ENCODE measurements at regions of chr12 and their contacts with region 1.

Region 1: GRCh38 chr12:111685744-111686517 is at the starts of genes ACAD10 and BRAP:
- DNase-seq: peak; percentile 97
- H3K4me3 Mint-ChIP-seq: peak within 1 kb of the TSS; percentile 95
- H3K27ac Mint-ChIP-seq: peak within 1 kb of the TSS; percentile 89
- H3K4me1 Mint-ChIP-seq: peaks cover 32% of the 10 kb centered on the region
- H3K27me3 Mint-ChIP-seq: peaks cover 2% of the 10 kb centered on the region
- total RNA-seq, gene ACAD10: 22.5 to 24.2 TPM
- total RNA-seq, gene BRAP: 16.8 to 18.0 TPM

Region 2: DNA sequence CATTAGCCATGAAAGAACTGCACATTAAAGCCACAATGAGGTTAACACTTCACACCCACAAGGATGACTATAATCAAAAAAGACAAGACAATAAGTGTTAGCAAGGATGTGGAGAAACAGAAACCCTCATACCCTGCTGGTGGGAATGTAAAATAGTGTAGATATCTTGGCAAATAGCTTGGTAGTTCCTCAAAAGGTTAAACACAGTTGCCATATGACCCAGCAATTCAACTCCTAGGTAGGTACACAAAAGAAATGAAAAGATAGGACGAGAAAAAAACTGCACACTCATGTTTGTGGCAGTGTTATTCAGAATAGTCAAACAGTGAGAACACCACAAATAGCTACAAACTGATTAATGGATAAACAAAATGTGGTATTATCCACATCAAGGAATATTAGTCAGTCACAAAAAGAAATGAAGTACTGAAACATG is 180.3 kb before region 1 on chr12:
- CTCF ChIA-PET with region 1: no interaction called
- POLR2A ChIA-PET with region 1: no interaction called
- intact Hi-C with region 1: no loop called
- DNase-seq: no peak
- H3K4me3 Mint-ChIP-seq: no peak overlapping the region
- H3K27ac Mint-ChIP-seq: no peak overlapping the region
- H3K4me1 Mint-ChIP-seq: peaks cover 11% of the 10 kb centered on the region
- H3K27me3 Mint-ChIP-seq: no peaks in the 10 kb centered on the region

Region 3: DNA sequence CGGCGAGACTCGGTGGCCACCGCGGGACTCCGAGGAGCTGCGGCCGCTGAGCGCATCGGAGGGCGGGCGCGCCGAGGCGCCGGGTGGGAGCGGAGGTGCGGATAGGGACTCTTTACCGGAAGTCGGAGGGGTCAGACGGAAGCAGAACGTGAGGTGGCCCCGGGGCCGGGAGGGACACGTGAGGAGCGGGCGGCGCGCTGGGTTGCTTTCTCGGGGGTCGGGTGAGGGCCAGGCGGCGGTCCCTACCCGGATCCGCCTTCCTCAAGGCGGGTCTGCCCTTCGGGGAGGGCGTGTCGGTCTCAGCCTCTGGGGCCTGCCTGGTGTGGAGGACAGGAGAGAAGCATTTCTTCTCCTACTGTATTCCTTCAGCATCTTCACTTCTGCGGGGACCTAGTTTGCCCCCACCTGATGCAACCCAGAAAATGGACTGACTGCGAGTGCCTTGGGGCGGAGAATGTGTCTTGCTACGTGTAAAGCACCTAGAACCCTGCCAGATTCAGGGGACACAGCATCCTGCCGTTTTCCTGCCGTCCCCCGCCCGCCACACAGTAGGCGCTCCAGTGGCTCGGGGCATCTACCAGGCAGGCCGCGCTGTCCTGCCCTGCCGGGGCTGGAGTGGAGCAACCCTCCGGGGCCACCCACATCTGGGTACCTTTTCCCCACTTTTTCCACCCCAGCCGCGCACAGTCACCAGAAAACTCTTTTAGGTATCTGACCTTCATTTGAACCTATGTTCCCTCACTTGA is 86.3 kb before region 1 on chr12:
- CTCF ChIA-PET with region 1: interaction called, 3 read pairs
- POLR2A ChIA-PET with region 1: interaction called, 5 read pairs
- intact Hi-C with region 1: loop called (anchors 5 kb)
- DNase-seq: peak; percentile 89
- H3K4me3 Mint-ChIP-seq: peak overlapping the region; percentile 85
- H3K27ac Mint-ChIP-seq: peak overlapping the region; percentile 89
- H3K4me1 Mint-ChIP-seq: peaks cover 26% of the 10 kb centered on the region
- H3K27me3 Mint-ChIP-seq: no peaks in the 10 kb centered on the region

Region 4: DNA sequence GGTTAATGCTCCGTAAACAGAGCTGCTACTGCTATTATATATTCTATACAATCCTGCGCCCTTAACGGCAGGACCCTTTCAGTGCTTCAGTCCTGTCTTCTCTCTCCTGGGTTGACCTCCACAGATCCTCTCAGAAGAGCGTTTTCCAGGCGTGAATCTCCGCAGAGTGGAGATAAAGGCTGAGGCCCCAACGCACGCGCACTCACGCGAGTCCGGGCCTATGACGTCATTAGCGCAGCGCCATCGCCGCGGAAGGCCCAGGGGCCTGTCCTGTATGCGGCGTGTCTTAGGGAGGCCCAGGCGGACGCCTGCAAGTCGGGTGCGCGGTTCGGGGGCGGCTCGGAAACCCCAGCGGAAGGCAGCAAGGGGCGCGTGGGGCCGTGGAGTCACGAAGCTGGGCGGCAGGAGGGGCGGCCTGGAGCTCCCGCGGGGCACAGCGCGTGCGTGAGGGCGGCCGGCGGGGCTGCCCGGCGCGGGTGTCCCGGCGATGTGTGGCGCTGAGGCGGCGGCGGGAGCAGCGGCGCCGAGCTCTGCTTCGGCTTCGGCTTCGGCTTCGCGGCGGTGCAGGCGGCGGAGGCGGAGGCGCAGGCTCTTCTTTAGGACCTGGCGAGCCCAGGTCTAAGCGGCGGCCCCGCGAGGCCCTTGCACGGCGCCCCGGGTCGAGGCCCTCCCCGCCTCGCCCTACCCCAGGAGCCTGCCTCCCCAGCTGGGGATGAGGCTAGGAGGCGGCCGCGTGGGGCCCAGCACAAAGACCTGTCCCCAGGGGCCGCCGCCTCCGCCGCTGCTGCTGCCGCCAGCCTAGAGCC is 156.0 kb after region 1 on chr12 and contains the start of gene MAPKAPK5:
- CTCF ChIA-PET with region 1: no interaction called
- POLR2A ChIA-PET with region 1: no interaction called
- intact Hi-C with region 1: loop called (anchors 5 kb)
- DNase-seq: peak; percentile 98
- H3K4me3 Mint-ChIP-seq: peak within 1 kb of the TSS; percentile 98
- H3K27ac Mint-ChIP-seq: peak within 1 kb of the TSS; percentile 95
- H3K4me1 Mint-ChIP-seq: peaks cover 56% of the 10 kb centered on the region
- H3K27me3 Mint-ChIP-seq: no peaks in the 10 kb centered on the region
- total RNA-seq, gene MAPKAPK5: 53.7 to 53.9 TPM

Measured in activated CD4-positive, alpha-beta memory T cell treated with anti-CD3 and anti-CD28 coated beads for 36 hours (primary cell).